H1 (cell line): ENCODE measurements at regions of chr5 and their contacts with region 1.

Region 1: GRCh38 chr5:168893283-168893682 is 314.1 kb upstream of the PANK3 start:
- DNase-seq: no peak
- H3K4me3 ChIP-seq: no peak overlapping the region
- H3K27ac ChIP-seq: no peak overlapping the region
- H3K4me1 ChIP-seq: peaks cover 0 to 2% (median under 1%) of the 10 kb centered on the region in 4 experiments; a peak in 3 of 7 replicates
- H3K27me3 ChIP-seq: no peaks in the 10 kb centered on the region
- CTCF ChIP-seq: no peak
- EP300 ChIP-seq: no peak
- POLR2A ChIP-seq: no peak
- RAD21 ChIP-seq: no peak

Region 2: GRCh38 chr5:168607946-168608345 is 285.3 kb before region 1 on chr5:
- CTCF ChIA-PET with region 1: no interaction called
- POLR2A ChIA-PET with region 1: no interaction called
- DNase-seq: no peak
- H3K4me3 ChIP-seq: no peak overlapping the region
- H3K27ac ChIP-seq: no peak overlapping the region
- H3K4me1 ChIP-seq: no peaks in the 10 kb centered on the region
- H3K27me3 ChIP-seq: no peaks in the 10 kb centered on the region; a peak in 1 of 7 replicates
- CTCF ChIP-seq: no peak
- EP300 ChIP-seq: no peak
- POLR2A ChIP-seq: no peak
- RAD21 ChIP-seq: no peak

Region 3: GRCh38 chr5:168756453-168757391 is 136.6 kb before region 1 on chr5:
- CTCF ChIA-PET with region 1: no interaction called
- POLR2A ChIA-PET with region 1: no interaction called
- DNase-seq: no peak
- H3K4me3 ChIP-seq: no peak overlapping the region
- H3K27ac ChIP-seq: no peak overlapping the region
- H3K4me1 ChIP-seq: peaks cover 0 to 3% (median 1%) of the 10 kb centered on the region in 4 experiments; a peak in 1 of 7 replicates
- H3K27me3 ChIP-seq: no peaks in the 10 kb centered on the region
- CTCF ChIP-seq: no peak
- EP300 ChIP-seq: no peak
- POLR2A ChIP-seq: no peak
- RAD21 ChIP-seq: no peak

Region 4: GRCh38 chr5:168879929-168880328 is 13.4 kb before region 1 on chr5:
- CTCF ChIA-PET with region 1: interaction called, 12 read pairs
- POLR2A ChIA-PET with region 1: no interaction called
- DNase-seq: no peak
- H3K4me3 ChIP-seq: no peak overlapping the region
- H3K27ac ChIP-seq: no peak overlapping the region
- H3K4me1 ChIP-seq: peaks cover 3 to 16% (median 7%) of the 10 kb centered on the region in 4 experiments
- H3K27me3 ChIP-seq: peaks cover 0 to 7% (median 4%) of the 10 kb centered on the region in 4 experiments; a peak in 4 of 7 replicates
- CTCF ChIP-seq: no peak
- EP300 ChIP-seq: no peak
- POLR2A ChIP-seq: no peak
- RAD21 ChIP-seq: no peak